ENCODE measurements at regions of chr15 and their contacts with region 1.

Region 1: DNA sequence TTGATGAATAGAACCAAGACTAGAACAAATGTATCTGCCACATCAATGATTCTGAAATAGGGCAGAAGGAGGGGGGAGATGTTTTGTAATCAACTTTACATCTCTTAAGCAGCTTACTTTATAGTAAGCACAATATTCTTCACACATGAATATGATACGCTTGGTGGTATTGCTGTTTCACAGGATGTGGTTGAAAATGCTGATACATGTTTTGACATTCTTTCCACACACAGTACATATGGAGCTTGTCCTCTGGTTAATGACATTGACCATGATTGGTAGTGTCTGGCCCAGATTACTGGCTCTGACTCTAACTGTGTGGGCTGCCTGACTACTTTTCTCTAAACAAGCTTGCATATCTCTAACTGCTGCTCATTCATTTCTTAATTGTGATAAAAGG is 168.9 kb downstream of the KLHL25 start:
- DNase-seq: peak; percentile 59
- H3K4me3 ChIP-seq: no peak overlapping the region
- H3K27ac ChIP-seq: no peak overlapping the region
- H3K4me1 ChIP-seq: peaks cover 22% of the 10 kb centered on the region
- H3K27me3 ChIP-seq: no peaks in the 10 kb centered on the region
- CTCF ChIP-seq: no peak

Region 2: DNA sequence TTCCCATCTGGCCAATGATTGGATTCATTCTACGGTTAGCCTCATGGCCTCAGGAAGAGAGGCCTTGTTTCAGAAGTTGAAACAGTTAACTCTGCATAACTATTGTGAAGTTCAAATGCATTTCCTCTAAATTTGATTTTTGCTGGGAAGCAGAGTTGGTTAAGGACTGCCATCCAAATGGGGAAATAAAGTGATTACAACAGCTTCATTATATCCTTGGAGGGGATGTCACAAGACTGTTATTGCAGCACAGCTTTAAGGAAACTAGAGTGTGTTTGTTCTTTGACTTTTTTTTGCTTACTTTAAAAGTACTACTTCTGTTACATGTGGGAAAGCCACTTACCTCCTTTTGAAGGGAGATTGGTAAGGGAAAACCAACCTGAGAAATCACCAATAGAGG is 80.7 kb before region 1 on chr15:
- CTCF ChIA-PET with region 1: no interaction called
- dilution Hi-C with region 1: loop called (anchors 5 kb)
- in situ Hi-C with region 1: no loop called
- intact Hi-C with region 1: no loop called
- DNase-seq: no peak
- H3K4me3 ChIP-seq: no peak overlapping the region
- H3K27ac ChIP-seq: no peak overlapping the region
- H3K4me1 ChIP-seq: no peaks in the 10 kb centered on the region
- H3K27me3 ChIP-seq: no peaks in the 10 kb centered on the region
- CTCF ChIP-seq: no peak

Measured in mammary epithelial cell (primary cell).